ENCODE measurements at regions of chr7 and their contacts with region 1.

Region 1: DNA sequence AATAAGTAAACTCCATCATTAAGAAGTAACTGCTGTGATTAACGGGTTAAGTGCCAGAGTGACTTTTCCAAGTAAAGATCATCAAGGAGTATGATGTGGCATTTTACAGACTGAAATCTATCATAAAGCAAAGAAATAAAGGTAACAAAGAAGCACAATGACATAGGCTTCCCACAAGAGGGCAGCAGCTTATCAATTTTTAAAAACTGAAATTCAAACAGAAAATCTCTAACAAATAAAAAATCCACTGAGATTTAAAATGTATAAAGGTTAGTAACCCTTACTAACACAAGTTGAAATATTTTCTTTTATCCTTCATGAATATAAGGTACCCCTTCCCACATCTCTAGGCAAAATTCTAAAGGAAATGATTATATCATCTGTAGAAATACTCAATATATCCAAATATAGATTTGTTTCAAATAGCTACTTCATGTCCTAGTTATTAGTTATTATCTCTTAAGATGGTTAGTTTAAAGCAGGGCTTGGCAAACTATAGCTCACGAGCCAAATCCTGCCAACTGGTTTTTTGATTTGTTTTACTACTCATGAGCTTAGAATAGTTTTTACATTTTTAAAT is 29.2 kb downstream of the FAM3C start:
- DNase-seq: peak; percentile 47
- ATAC-seq: peak; percentile 36
- H3K4me3 Mint-ChIP-seq: no peak overlapping the region
- H3K27ac Mint-ChIP-seq: no peak overlapping the region
- H3K4me1 Mint-ChIP-seq: peaks cover 35% of the 10 kb centered on the region
- H3K27me3 Mint-ChIP-seq: no peaks in the 10 kb centered on the region

Region 2: GRCh38 chr7:121379930-121380329 is 13.0 kb after region 1 on chr7:
- CTCF ChIA-PET with region 1: interaction called, 44 read pairs
- POLR2A ChIA-PET with region 1: no interaction called
- DNase-seq: no peak
- ATAC-seq: no peak
- H3K4me3 Mint-ChIP-seq: no peak overlapping the region
- H3K27ac Mint-ChIP-seq: no peak overlapping the region
- H3K4me1 Mint-ChIP-seq: peaks cover 16% of the 10 kb centered on the region
- H3K27me3 Mint-ChIP-seq: no peaks in the 10 kb centered on the region

Region 3: DNA sequence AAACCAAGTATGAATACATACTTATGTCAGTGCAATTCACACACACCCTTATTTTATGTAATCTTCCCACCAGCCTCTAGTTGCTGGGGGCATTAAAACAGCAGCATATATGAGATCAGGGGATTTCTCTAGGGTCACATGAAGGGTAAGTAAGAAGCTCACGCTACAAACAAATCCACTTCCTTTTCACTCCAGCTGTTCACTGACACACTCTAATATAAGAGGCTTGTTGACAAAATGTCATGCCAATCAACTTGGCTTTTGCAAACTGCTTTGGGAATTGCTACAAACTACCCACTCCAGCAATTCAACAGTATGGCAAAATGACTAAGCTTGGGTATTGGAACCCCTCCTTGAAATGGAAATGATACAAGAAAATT is 18.8 kb after region 1 on chr7:
- CTCF ChIA-PET with region 1: interaction called, 44 read pairs
- POLR2A ChIA-PET with region 1: interaction called, 3 read pairs
- DNase-seq: no peak
- ATAC-seq: peak; percentile 73
- H3K4me3 Mint-ChIP-seq: no peak overlapping the region
- H3K27ac Mint-ChIP-seq: no peak overlapping the region
- H3K4me1 Mint-ChIP-seq: peaks cover 44% of the 10 kb centered on the region
- H3K27me3 Mint-ChIP-seq: no peaks in the 10 kb centered on the region

Region 4: DNA sequence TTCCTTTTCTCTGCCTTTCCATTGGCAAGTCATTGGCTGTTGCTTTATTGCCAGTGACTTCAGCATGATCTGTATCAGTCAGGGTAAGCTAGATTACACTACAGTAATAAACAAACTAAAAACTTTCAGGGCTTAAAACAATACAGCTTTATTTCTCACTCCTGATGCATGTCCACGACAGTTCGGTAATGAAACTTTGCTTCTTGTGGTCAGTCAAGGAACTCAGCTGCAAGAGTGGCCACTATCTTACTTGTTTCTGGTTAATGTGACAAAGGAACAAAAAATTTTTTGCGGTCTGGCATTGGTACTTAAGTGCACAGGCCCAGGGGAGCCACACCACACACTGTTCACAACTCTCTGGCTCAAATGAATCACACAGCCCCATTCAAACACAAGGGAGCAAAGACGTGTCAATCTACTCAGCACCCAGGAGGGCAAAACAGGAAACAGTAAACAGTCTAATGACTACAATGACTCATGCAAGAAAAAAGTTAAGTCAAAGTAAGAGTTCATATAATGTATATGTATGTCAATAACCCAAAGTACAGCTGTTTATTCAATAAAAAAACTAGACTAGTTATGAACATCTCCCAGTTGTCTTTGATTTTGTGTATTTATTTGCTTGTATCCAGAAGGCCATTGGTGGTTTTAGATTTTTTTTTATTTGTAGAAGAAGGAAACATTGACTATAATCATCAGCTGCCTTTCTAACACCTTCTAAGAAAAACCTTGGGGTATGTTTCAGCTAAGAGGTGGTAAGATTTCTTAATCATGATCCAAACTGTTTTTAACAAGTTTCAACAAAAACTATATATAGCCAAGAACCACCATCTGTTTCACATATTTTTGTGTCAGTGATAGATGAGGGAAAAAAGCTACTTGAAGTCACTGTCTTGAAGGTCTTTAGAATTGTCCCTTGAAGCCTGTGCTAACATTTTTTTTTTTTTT is 163.6 kb after region 1 on chr7:
- CTCF ChIA-PET with region 1: interaction called, 11 read pairs
- POLR2A ChIA-PET with region 1: no interaction called
- DNase-seq: peak; percentile 71
- ATAC-seq: peak; percentile 99
- H3K4me3 Mint-ChIP-seq: peak overlapping the region; percentile 32
- H3K27ac Mint-ChIP-seq: peak overlapping the region; percentile 90
- H3K4me1 Mint-ChIP-seq: peaks cover 30% of the 10 kb centered on the region
- H3K27me3 Mint-ChIP-seq: peaks cover 6% of the 10 kb centered on the region

Region 5: GRCh38 chr7:121547544-121548092 is 180.7 kb after region 1 on chr7:
- CTCF ChIA-PET with region 1: interaction called, 91 read pairs
- POLR2A ChIA-PET with region 1: no interaction called
- DNase-seq: peak; percentile 33
- ATAC-seq: peak; percentile 82
- H3K4me3 Mint-ChIP-seq: no peak overlapping the region
- H3K27ac Mint-ChIP-seq: no peak overlapping the region
- H3K4me1 Mint-ChIP-seq: peaks cover 30% of the 10 kb centered on the region
- H3K27me3 Mint-ChIP-seq: no peaks in the 10 kb centered on the region

Region 6: DNA sequence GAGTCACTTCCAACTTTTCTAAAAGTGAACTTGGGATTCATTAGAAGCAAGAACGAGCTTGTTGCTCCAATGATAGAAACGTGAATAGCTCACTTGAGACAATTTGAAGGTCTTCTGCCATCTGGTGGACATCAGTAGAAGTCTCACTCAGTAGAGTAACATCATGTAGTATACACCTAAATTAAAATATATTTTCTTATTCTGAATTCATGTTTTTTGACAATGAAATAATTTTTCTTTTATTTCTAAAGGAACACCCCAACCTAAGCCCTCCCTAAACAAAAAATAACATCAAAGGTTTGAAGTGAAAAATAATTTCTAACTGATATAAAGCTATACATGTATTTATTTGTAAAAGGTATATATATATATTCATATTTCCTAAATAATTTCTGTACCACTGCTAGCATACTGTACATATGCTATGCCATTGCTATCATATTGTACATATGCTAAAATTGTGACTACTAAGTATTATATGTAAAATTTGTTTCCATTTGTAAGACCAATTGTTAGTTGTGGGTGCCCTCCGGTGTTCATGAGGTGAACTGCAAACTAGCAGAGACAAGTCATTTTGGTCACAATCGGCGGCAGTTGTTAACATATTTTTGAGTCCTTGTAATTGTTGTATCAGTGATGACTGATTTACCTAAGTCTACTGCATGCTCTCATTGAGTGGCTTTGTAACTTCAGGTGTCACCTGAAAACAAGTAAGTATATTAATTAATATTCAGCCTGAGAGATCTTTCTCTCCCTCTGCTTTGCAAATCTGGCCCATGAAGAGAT is 627.9 kb after region 1 on chr7:
- CTCF ChIA-PET with region 1: interaction called, 10 read pairs
- POLR2A ChIA-PET with region 1: no interaction called
- DNase-seq: peak; percentile 61
- ATAC-seq: peak; percentile 67
- H3K4me3 Mint-ChIP-seq: no peak overlapping the region
- H3K27ac Mint-ChIP-seq: no peak overlapping the region
- H3K4me1 Mint-ChIP-seq: no peaks in the 10 kb centered on the region
- H3K27me3 Mint-ChIP-seq: no peaks in the 10 kb centered on the region